ENCODE measurements at regions of chr1 and their contacts with region 1.

Region 1: DNA sequence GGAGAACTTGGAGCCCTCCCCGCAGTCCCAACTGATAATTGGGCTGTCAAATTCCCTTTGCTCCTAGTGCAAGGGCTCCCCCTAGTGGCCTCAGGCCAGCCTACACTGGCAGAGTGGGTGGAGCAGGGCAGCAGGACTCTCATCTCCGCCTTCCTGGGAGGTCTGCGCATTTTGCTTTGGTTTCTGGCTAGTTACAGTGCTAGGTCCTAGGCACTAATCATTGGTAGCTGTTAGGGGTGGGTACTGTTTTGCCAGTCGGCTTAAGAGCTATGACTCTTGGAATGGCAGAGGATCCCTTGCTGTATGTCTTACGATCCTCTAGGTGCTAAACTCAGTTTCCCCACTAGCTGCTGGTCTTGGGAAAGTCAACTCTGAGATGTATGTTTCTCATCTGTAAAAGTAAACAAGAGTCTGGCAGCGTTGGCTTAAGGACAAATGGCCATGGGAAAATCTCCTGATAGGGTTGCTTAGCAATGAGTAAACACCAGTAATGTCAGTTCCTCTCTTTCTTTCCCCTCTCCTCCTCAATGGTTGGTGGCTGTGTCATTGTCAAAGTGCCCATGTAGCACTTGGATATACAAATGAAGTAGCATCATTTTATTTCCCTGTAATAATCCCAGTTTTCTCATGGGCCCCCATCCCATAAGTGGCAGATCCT is 2.1 kb upstream of the FYB2 start:
- DNase-seq: peak; percentile 82
- ATAC-seq: peak; percentile 75
- H3K4me3 Mint-ChIP-seq: no peak overlapping the region
- H3K27ac Mint-ChIP-seq: no peak overlapping the region
- H3K4me1 Mint-ChIP-seq: no peaks in the 10 kb centered on the region
- H3K27me3 Mint-ChIP-seq: peaks cover 6% of the 10 kb centered on the region
- CTCF ChIP-seq: peak; percentile 87

Region 2: DNA sequence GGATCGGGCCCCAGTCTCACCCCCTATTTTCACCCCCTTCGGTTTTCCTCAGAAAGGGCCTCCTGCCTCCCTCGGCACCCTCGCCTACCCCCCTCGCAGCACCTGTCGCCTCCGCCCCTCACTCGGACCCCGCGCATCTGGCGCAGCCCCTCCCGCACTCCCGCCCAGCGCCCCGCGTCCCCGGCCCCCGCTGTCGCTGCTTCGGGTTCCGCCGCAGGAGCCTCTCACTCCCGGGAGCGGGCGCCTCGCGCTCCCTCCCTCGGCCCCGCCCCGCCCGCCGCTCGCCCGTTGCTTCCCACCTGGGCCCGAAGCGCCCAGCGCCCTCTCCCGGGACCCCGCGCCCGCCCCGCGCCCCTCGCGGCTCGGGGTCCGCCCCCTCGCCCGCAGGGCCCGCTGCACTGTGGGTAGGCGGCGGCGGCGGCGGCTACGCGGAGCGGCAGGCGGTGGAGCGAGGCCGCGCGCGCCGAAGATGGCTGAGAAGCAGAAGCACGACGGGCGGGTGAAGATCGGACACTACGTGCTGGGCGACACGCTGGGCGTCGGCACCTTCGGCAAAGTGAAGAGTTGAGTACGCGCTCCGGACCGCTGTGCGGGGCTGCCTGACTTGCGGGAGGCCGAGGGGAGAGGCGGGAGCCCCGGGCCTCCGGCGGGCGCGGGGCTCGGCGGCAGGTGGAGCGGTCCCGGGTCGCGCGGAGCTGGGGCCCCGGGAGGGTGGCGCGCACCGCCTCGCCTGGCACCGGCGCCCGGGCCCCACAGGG is 176.2 kb before region 1 on chr1 and contains the start of gene PRKAA2:
- CTCF ChIA-PET with region 1: no interaction called
- POLR2A ChIA-PET with region 1: no interaction called
- intact Hi-C with region 1: no loop called
- DNase-seq: peak; percentile 13
- ATAC-seq: peak; percentile 42
- H3K4me3 Mint-ChIP-seq: peak within 1 kb of the TSS; percentile 50
- H3K27ac Mint-ChIP-seq: no peak within 1 kb of the TSS
- H3K4me1 Mint-ChIP-seq: peaks cover 6% of the 10 kb centered on the region
- H3K27me3 Mint-ChIP-seq: peaks cover 38% of the 10 kb centered on the region
- CTCF ChIP-seq: no peak
- total RNA-seq, gene PRKAA2: not detected

Region 3: DNA sequence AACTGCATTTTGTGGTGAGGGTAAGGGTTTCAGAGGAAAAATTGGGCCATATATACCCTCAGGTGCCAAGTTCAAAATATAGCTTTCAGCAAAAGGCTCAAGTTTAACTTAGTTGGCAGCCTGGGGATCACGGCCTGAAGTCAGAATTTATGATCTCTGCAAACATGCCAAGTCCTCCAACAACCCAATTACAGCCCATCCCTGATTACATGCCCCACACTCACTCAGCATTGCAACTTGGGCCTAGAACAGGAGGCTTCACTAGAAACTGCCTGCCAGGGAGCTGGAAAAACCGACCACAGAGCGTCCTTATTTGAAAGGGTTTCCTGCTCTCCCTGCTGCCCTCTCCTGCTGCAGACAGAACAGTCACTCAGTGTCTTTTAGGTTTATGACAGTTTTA is 14.5 kb before region 1 on chr1:
- CTCF ChIA-PET with region 1: interaction called, 14 read pairs
- POLR2A ChIA-PET with region 1: no interaction called
- intact Hi-C with region 1: no loop called
- DNase-seq: no peak
- ATAC-seq: no peak
- H3K4me3 Mint-ChIP-seq: no peak overlapping the region
- H3K27ac Mint-ChIP-seq: no peak overlapping the region
- H3K4me1 Mint-ChIP-seq: no peaks in the 10 kb centered on the region
- H3K27me3 Mint-ChIP-seq: peaks cover 8% of the 10 kb centered on the region
- CTCF ChIP-seq: no peak

Region 4: DNA sequence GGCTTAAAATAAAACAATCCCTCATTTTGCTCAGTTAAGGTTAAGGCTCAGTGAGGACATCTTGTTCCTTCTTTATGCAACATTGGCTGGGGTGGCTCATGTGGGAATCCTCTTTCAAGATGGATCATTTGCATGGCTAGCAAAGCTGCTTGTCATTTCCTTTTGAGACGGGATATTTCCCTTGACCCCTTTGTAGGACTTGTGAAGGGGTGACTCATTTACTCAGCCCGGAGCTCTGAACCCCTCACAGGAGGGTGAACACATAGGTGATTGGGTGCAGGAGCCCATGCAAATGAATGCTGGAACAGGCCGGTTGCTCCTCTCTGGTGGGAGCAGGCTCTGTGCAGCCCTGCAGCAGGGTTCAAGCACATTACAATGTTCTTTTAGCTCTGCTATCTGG is 17.5 kb after region 1 on chr1:
- CTCF ChIA-PET with region 1: no interaction called
- POLR2A ChIA-PET with region 1: no interaction called
- intact Hi-C with region 1: no loop called
- DNase-seq: no peak
- ATAC-seq: no peak
- H3K4me3 Mint-ChIP-seq: no peak overlapping the region
- H3K27ac Mint-ChIP-seq: no peak overlapping the region
- H3K4me1 Mint-ChIP-seq: no peaks in the 10 kb centered on the region
- H3K27me3 Mint-ChIP-seq: peaks cover 4% of the 10 kb centered on the region
- CTCF ChIP-seq: no peak

Region 5: DNA sequence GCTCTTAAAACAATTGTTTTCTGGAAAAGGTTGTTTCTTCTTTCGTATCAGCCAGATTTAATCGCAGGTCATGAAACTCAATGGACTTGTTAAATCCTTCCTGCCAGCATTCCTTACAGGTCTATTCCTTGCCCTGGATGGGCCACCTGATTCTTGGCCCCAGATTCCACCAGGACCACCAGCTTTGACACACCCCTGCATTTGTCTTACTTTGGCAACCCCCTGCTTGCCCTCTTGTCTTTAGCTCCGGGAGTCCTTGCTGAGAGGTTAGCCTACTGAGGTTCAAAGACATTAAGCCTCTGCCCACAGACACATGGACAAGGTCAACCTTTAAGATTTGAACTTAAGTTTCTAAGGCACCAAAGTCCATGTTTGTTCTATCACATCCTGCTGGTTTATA is 629.7 kb after region 1 on chr1:
- CTCF ChIA-PET with region 1: no interaction called
- POLR2A ChIA-PET with region 1: no interaction called
- intact Hi-C with region 1: no loop called
- DNase-seq: no peak
- ATAC-seq: no peak
- H3K4me3 Mint-ChIP-seq: no peak overlapping the region
- H3K27ac Mint-ChIP-seq: no peak overlapping the region
- H3K4me1 Mint-ChIP-seq: no peaks in the 10 kb centered on the region
- H3K27me3 Mint-ChIP-seq: peaks cover 16% of the 10 kb centered on the region
- CTCF ChIP-seq: no peak

Measured in activated CD8-positive, alpha-beta T cell treated with anti-CD3 and anti-CD28 coated beads for 36 hours (primary cell).